Calu3 (cell line): ENCODE measurements at regions of chr2 and their contacts with region 1.

Region 1: DNA sequence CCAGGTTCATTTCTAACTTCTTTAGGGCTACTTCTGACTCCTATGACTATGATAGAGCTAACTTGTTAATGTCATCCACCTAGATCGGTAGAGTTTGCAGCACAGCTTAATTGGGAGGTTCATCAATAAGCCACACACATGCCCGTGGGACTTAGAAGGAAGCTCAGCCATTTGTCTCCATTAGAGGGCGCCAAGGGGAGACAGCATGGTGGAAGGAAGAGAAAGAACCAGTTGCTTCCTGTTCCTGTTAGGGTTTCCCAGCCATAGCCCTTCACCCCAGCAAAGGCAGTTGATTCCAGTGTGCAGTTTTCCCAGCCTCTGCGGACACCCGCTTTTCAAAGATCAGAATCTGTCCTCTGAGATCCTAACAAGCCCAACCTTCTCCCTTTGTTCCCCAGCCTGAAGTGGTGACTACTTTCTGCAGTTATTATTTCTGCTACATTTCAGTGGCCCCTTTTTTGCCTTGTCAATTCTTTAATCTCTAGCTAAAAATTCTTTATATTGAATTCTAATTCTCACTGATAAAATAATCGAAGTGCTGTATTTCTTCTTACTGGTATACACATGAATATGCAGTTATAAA is 30.3 kb downstream of the MAIP1 start:
- DNase-seq: peak; percentile 81
- H3K4me3 Mint-ChIP-seq: no peak overlapping the region
- H3K27ac Mint-ChIP-seq: no peak overlapping the region
- H3K4me1 Mint-ChIP-seq: peaks cover 18% of the 10 kb centered on the region
- H3K27me3 Mint-ChIP-seq: no peaks in the 10 kb centered on the region
- CTCF ChIP-seq: peak; percentile 72

Region 2: GRCh38 chr2:200054681-200055468 is 69.2 kb after region 1 on chr2:
- CTCF ChIA-PET with region 1: no interaction called
- intact Hi-C with region 1: loop called (anchors 5 kb)
- DNase-seq: no peak
- H3K4me3 Mint-ChIP-seq: no peak overlapping the region
- H3K27ac Mint-ChIP-seq: no peak overlapping the region
- H3K4me1 Mint-ChIP-seq: peaks cover 31% of the 10 kb centered on the region
- H3K27me3 Mint-ChIP-seq: no peaks in the 10 kb centered on the region
- CTCF ChIP-seq: no peak

Region 3: DNA sequence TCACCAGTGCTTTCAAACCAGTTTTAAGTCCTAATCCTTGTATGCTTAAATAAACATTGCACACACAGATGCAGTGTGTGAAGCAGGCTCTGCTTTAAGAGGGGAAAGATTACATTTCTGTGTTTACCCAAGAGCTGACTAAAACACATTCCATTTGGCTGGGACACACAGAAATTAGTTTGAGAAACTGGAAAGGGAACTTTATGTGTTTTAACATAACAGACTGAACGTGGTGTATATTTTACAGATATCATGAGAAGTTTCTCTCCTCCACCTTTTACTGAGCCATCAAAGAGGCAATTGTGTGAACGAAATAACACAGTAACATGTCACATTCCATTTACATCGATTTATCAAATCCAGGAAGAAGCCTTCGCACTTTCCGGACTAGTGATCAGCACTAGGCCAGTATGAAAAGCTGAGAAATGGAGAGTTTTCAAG is 91.5 kb after region 1 on chr2:
- CTCF ChIA-PET with region 1: no interaction called
- intact Hi-C with region 1: loop called (anchors 5 kb)
- DNase-seq: peak; percentile 43
- H3K4me3 Mint-ChIP-seq: no peak overlapping the region
- H3K27ac Mint-ChIP-seq: peak overlapping the region; percentile 90
- H3K4me1 Mint-ChIP-seq: peaks cover 35% of the 10 kb centered on the region
- H3K27me3 Mint-ChIP-seq: no peaks in the 10 kb centered on the region
- CTCF ChIP-seq: no peak

Region 4: GRCh38 chr2:200156166-200156835 is 170.6 kb after region 1 on chr2:
- CTCF ChIA-PET with region 1: no interaction called
- intact Hi-C with region 1: loop called (anchors 10 kb)
- DNase-seq: peak; percentile 59
- H3K4me3 Mint-ChIP-seq: peak overlapping the region; percentile 51
- H3K27ac Mint-ChIP-seq: peak overlapping the region; percentile 50
- H3K4me1 Mint-ChIP-seq: peaks cover 34% of the 10 kb centered on the region
- H3K27me3 Mint-ChIP-seq: no peaks in the 10 kb centered on the region
- CTCF ChIP-seq: no peak

Region 5: GRCh38 chr2:200203381-200203827 is 217.7 kb after region 1 on chr2:
- CTCF ChIA-PET with region 1: no interaction called
- intact Hi-C with region 1: no loop called
- DNase-seq: no peak
- H3K4me3 Mint-ChIP-seq: no peak overlapping the region
- H3K27ac Mint-ChIP-seq: no peak overlapping the region
- H3K4me1 Mint-ChIP-seq: no peaks in the 10 kb centered on the region
- H3K27me3 Mint-ChIP-seq: no peaks in the 10 kb centered on the region
- CTCF ChIP-seq: no peak